RWPE1 (cell line): ENCODE measurements at regions of chr4 and their contacts with region 1.

Region 1: DNA sequence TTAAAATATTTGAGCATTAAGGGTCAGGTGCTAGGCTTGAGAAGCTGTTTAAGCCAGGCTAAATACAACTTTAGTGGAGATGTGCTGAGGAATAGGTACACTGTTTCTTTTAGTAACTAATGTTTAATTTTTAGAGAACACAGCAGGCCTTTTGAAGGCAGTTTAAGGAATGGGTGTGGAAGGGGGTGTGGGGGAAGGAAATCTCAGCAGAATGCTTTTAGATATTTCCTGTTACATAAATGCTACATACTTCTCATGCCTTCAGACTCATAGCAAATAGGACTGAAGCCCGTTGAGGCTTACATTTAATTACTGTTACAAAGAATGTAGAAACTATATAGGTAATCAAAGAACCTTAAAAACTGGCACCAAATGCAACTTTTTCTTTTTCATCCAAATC is 66.3 kb downstream of the WWC2 start:
- DNase-seq: peak; percentile 13
- H3K27ac ChIP-seq: no peak overlapping the region
- CTCF ChIP-seq: no peak

Region 2: GRCh38 chr4:183541010-183541751 is 375.8 kb after region 1 on chr4:
- CTCF ChIA-PET with region 1: no interaction called
- POLR2A ChIA-PET with region 1: no interaction called
- DNase-seq: no peak
- H3K27ac ChIP-seq: no peak overlapping the region
- CTCF ChIP-seq: no peak

Region 3: DNA sequence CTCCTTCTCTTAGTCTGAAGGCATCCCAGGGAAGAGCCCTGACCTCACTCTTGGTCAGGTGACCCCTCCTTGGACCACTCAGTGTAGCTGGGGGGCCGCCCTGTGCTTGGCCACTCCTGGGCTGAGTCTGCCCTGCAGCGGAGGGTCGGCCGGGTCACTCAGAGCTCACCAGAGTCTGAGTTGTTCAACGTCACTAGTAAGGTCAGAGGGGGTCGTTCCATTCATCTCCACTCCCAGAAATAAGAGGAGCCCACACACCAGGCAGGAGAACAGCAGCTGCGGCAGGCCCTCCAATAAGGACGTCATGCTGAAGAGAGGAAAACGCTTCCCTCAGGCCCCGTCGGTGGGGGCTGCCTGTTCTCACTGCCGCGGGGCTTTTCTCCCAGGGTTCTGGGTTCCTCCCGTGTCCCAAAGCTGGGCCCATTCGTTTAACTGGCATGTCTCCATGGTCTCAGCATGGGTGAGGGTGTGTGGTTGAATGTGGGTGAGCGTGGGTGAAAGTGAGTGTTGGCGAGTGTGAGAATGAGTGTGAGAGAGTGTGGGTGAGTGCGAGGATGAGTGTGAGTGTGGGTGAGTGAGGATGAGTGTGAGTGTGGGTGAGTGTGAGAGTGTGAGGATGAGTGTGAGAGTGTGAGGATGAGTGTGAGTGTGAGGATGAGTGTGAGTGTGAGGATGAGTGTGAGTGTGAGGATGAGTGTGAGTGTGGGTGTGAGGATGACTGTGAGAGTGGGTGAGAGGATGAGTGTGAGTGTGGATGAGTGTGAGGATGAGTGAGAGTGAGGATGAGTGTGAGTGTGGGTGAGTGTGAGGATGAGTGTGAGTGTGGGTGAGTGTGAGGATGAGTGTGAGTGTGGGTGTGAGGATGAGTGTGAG is 387.1 kb after region 1 on chr4:
- CTCF ChIA-PET with region 1: no interaction called
- POLR2A ChIA-PET with region 1: no interaction called
- DNase-seq: no peak
- H3K27ac ChIP-seq: no peak overlapping the region
- CTCF ChIP-seq: no peak

Region 4: DNA sequence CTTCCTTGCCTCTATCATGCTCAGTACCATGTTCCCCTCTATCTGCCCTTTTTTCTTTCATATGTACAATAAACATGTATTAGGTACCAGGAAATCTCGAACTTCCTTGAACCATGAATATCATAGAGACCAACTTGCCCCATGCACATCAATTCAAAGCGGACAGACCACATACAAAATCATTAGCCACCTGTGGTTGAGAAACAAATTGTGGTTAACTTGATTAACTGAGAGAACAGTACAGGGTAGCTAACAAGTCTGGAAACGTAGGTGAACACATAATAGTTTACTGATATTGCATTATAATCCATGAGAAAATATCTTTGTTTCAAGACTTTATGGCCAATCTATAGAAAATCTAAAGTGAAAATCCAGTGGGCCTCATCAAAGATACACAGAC is 1475.6 kb after region 1 on chr4:
- CTCF ChIA-PET with region 1: interaction called, 11 read pairs
- POLR2A ChIA-PET with region 1: no interaction called
- DNase-seq: no peak
- H3K27ac ChIP-seq: no peak overlapping the region
- CTCF ChIP-seq: no peak